Posterior cingulate gyrus (tissue), 11 donors: ENCODE measurements at regions of chr2 and their contacts with region 1.

Region 1: DNA sequence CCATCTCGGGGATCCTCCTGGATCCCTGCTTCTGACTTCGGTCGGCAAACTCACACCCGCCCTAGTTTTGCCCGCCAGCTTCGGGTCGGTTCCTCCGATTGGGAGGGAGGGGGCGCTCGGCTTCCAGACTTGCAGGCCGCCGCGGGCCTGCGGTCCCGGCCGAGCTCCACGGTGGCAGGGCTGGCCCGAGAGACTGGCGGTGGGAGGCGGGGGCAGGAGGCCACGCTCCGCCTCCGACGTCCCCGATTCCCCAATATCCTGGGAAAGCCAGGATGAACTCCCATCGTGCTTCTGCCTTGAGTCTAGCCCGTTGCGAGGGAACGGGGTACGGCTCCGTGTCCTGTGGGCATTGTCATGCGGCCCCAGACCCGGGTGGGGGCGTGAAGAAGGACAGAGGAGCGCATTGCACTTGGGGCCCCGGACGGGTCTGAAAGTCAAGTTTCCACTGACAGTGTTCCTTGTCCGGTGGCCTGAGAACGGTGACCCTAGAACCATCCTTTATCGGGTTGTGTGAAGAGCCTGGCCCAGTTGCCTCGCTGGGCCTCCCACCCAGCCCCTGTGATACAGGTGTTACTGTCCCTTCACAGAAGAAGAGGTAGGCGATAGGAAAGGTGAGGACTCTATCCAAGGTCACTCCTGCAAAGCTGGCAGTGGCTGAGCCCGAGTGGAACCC is 2.4 kb upstream of the INHBB start:
- DNase-seq: peak; percentile 66 to 97 (median 80)

Region 2: DNA sequence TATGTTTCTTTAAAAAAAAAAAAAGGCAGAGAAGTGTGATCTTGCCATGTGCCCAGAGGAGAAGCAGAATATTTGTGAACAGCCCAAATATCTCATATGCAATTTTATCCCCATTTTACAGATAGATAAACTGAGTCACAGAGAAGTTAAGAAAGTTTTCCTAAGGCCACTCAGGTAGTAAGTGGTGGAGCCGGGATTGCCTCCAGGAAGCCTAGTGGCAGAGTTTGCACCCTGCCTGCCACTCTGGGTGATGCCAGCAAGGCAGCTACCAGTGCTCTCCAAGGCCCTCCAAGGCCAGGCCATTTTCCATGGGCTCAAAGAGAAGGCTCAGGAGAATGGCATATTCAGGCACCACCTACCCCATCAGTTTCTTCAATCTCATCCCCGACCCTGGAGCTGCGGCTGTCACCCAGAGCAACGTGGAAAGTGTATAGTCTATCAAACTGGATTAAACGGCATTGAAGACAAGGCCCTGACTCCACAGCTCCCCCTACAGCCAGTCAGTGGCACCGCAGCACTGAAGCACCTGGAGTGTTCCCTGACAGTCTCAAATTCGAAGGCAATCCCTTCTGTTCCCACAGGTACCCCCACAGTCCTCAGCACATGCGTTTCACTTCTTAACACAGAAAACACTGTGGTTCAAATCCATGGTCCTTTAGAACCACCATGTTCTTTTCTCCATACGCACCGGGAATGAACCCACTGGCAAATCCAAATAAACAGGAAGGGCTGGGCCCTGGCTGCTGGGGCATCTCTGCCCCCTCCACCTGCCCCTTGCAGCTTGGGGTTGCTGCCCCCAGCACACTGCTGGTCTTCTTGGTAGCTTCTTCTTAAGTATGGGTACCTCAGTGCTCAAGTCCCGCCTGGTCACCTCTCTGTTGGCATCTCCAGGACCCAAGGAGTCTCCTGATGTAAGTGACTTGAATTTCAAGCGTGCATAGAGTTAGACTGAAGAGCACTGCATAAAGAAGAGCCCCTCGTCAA is 177.7 kb after region 1 on chr2:
- intact Hi-C with region 1: loop called (anchors 5 kb)
- DNase-seq: peak in 7 of 10 donors; percentile 28 to 87 (median 49)

Region 3: DNA sequence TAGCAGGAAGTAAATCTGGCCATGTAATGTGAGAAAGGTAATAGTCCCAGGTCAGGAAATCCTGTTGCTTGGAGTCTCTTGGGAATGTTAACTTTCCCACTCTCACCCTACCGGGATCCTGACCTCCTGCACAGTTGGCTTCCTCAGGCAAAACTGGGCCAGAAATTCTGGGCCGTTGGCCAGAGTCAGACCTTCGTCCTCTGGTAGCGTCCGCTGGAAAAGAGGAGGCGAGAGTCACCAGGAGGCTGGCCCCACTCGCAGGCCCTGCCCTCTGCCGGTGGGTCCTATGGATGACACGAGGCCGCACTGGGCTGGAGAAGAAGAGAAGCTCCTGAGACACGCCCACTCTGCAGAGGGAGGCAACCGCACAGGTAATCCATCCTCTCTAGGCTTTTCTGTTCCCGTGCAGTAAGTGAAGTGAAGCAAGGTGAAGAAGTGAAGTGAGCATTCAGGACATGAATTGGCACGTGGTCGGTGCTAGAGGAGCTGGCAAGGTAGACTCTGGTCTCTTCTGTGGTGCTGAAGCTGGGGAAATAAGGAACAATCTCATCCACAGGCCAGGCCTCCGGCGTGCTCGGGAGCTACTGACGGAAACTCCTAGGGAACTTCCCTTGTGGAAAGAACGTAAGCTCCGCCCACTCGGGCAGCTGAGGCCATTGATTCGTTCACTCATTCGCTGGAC is 209.4 kb after region 1 on chr2:
- intact Hi-C with region 1: loop called (anchors 1 kb)
- DNase-seq: peak in 9 of 10 donors; percentile 40 to 91 (median 58)

Region 4: GRCh38 chr2:120680136-120680761 is 336.7 kb after region 1 on chr2:
- intact Hi-C with region 1: loop called (anchors 1 kb)
- DNase-seq: peak; percentile 61 to 97 (median 86)

Region 5: DNA sequence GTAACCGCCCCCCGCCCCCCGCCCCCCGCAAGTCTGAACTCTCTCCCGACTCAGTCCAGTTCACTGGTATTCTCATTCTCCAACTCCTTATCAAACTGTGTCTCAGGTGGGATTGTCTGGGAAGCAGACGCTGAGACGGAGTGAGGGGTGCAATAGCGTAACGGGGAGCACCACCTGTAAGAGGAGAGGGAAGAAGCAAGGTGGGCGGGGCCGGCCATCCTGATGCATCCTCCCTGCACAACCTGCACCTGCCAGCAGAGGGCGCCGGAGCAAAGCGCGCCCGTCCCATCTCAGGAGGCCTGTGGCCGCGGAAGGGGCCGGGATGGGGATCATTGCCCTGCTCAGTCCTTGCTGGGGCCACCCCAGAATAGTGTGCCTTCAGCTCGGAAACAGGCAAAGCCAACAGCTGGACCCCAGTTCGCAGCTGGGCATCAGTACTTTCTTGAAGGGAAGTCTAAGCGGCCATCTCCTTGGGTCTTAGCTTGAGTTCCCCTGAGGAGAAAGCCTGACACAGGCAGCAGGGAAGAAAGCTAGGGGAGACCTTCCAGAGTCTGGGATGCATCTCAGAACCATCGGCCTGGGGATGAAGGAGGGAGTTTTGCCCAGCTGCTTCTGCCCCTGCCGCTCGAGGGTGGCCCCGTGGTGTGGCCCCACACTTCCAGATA is 733.4 kb after region 1 on chr2:
- intact Hi-C with region 1: loop called (anchors 10 kb)
- DNase-seq: peak in 4 of 10 donors; percentile 26 to 57 (median 42)